OCI-LY7 (cell line): ENCODE measurements at regions of chr16 and their contacts with region 1.

Region 1: DNA sequence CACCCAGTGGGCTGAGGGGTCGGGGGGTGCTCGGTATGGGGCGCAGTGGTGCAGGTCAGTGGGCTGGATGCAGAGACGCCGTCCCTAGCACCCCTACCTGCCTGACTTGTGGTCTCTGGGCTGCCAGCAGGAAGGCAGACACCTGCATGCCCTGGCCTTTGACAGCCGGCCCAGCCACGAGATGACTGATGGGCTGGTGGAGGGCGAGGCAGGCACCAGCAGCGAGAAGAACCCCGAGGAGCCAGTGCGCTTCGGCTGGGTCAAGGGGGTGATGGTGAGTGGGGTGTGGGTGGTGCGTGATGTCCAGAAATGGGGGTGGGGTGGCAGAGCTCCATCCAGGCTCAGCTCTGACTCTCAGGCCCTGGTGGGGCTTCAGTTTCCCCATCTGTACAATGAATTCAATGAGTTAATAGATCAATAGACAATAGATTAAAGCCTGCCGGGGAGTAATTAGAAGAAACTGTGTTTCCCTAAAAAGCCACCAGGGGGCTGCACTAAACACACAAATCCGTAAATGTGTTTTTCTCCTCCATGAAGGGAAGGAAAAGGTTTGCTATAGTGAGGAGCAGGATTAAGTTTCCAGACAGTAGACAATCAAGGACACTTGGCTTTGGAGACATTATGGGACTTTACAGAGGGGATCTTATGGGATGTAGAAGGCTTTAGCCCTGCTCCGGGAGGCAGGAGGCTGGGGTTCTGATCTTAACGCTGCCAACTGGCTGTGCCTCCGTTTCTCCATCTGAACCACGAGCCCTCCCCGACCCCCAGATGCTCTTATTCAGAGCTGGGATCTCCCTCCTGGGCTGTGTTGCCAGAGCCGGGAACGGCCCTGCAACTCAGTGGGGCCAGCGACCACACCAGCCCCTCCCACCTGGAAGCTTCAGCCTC is 2.2 kb downstream of the SLC12A3 start:
- DNase-seq: peak; percentile 82
- H3K4me3 ChIP-seq: no peak overlapping the region
- H3K27ac ChIP-seq: no peak overlapping the region
- H3K4me1 ChIP-seq: peaks cover 44% of the 10 kb centered on the region
- CTCF ChIP-seq: peak; percentile 96

Region 2: GRCh38 chr16:55233464-55233863 is 1633.7 kb before region 1 on chr16:
- CTCF ChIA-PET with region 1: no interaction called
- POLR2A ChIA-PET with region 1: no interaction called
- intact Hi-C with region 1: no loop called
- DNase-seq: no peak
- H3K4me3 ChIP-seq: no peak overlapping the region
- H3K27ac ChIP-seq: no peak overlapping the region
- H3K4me1 ChIP-seq: no peaks in the 10 kb centered on the region
- CTCF ChIP-seq: no peak

Region 3: DNA sequence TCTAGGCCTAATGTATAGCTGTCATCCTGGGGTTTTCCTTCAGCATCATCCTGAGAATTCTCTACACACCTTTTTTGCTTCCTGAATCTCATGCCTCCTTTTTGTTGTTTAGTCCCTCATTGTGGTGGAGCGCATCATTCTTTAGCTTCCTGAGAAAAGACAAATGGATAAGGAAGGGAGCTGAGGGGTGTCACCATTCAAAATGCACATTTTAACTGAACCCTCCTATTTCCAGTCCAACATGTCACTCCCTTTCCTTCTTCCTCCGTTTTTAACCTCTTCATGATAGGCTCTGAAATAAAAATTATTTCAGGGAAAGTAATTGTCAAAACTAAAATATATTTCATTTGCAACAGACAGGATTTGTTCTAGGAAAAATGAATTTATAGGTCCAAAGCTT is 715.6 kb before region 1 on chr16:
- CTCF ChIA-PET with region 1: no interaction called
- POLR2A ChIA-PET with region 1: no interaction called
- intact Hi-C with region 1: no loop called
- DNase-seq: no peak
- H3K4me3 ChIP-seq: no peak overlapping the region
- H3K27ac ChIP-seq: no peak overlapping the region
- H3K4me1 ChIP-seq: no peaks in the 10 kb centered on the region
- CTCF ChIP-seq: no peak

Region 4: GRCh38 chr16:56776562-56776961 is 90.6 kb before region 1 on chr16:
- CTCF ChIA-PET with region 1: no interaction called
- POLR2A ChIA-PET with region 1: no interaction called
- intact Hi-C with region 1: no loop called
- DNase-seq: no peak
- H3K4me3 ChIP-seq: no peak overlapping the region
- H3K27ac ChIP-seq: no peak overlapping the region
- H3K4me1 ChIP-seq: no peaks in the 10 kb centered on the region
- CTCF ChIP-seq: no peak

Region 5: GRCh38 chr16:56888806-56889205 is 21.6 kb after region 1 on chr16:
- CTCF ChIA-PET with region 1: interaction called, 3 read pairs
- POLR2A ChIA-PET with region 1: interaction called, 3 read pairs
- intact Hi-C with region 1: loop called (anchors 2 kb)
- DNase-seq: peak; percentile 93
- H3K4me3 ChIP-seq: peak overlapping the region; percentile 39
- H3K27ac ChIP-seq: peak overlapping the region; percentile 62
- H3K4me1 ChIP-seq: peaks cover 23% of the 10 kb centered on the region
- CTCF ChIP-seq: peak; percentile 40; the same call in 1 of the 2 replicates

Region 6: GRCh38 chr16:57178793-57179212 is 311.6 kb after region 1 on chr16:
- CTCF ChIA-PET with region 1: no interaction called
- POLR2A ChIA-PET with region 1: no interaction called
- intact Hi-C with region 1: no loop called
- DNase-seq: no peak
- H3K4me3 ChIP-seq: no peak overlapping the region
- H3K27ac ChIP-seq: no peak overlapping the region
- H3K4me1 ChIP-seq: peaks cover 11% of the 10 kb centered on the region
- CTCF ChIP-seq: no peak